Left ventricle myocardium inferior (tissue), 1 donor: ENCODE measurements at regions of chr2 and their contacts with region 1.

Region 1: GRCh38 chr2:158713523-158714138 is 81.5 kb upstream of the DAPL1 start:
- DNase-seq: no peak
- H3K4me3 ChIP-seq: no peak overlapping the region
- H3K27ac ChIP-seq: no peak overlapping the region
- H3K4me1 ChIP-seq: peaks cover 40% of the 10 kb centered on the region
- H3K27me3 ChIP-seq: no peaks in the 10 kb centered on the region
- CTCF ChIP-seq: no peak

Region 2: DNA sequence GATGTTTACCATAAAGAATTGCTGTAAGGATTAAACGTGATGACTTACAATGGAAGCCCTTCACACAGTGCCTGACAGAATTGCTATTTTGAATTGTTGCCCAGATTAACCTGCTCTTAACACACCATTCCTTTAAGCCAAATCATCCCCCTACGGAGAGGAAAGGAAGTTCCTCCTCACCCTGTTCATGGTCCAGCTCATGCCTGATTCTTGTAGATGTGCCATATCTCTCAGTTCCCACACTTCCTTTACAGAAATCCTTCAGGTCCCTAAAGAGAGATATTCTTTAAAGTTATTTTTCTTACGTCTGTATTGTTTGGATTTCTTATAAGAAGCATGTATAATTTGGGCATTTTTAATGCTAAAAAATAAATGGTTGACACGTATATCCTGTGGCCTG is 46.0 kb before region 1 on chr2:
- intact Hi-C with region 1: loop called (anchors 2 kb)
- DNase-seq: no peak
- H3K4me3 ChIP-seq: no peak overlapping the region
- H3K27ac ChIP-seq: peak overlapping the region; percentile 70
- H3K4me1 ChIP-seq: peaks cover 74% of the 10 kb centered on the region
- H3K27me3 ChIP-seq: no peaks in the 10 kb centered on the region
- CTCF ChIP-seq: no peak